ENCODE measurements at regions of chr10 and their contacts with region 1.

Region 1: GRCh38 chr10:13440185-13441061 is 88.4 kb downstream of the BEND7 start:
- DNase-seq: peak; percentile 65
- H3K27ac ChIP-seq: no peak overlapping the region
- CTCF ChIP-seq: peak; percentile 82

Region 2: GRCh38 chr10:13371897-13372470 is 68.4 kb before region 1 on chr10:
- CTCF ChIA-PET with region 1: interaction called, 31 read pairs
- POLR2A ChIA-PET with region 1: no interaction called
- DNase-seq: peak; percentile 91
- H3K27ac ChIP-seq: no peak overlapping the region
- CTCF ChIP-seq: peak; percentile 89

Region 3: DNA sequence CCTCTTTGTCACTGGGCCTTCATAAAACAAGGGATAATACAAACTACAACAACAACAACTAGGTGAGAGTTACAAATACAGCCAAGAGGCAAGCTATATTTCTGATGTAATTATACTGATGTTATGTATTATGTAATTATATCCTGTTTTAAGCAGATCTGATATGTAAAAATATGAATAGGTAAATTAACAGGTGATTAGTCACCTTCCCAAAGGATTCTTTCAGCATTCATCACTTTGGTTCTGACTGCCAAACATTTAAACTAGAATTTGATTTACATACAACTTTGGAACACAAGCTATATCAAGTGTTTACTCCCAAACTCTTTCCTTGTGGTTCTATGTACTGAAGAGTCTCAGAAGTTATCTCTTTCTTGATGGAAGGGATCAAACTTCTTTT is 34.7 kb after region 1 on chr10:
- CTCF ChIA-PET with region 1: no interaction called
- POLR2A ChIA-PET with region 1: no interaction called
- DNase-seq: peak; percentile 60
- H3K27ac ChIP-seq: no peak overlapping the region
- CTCF ChIP-seq: no peak

Region 4: DNA sequence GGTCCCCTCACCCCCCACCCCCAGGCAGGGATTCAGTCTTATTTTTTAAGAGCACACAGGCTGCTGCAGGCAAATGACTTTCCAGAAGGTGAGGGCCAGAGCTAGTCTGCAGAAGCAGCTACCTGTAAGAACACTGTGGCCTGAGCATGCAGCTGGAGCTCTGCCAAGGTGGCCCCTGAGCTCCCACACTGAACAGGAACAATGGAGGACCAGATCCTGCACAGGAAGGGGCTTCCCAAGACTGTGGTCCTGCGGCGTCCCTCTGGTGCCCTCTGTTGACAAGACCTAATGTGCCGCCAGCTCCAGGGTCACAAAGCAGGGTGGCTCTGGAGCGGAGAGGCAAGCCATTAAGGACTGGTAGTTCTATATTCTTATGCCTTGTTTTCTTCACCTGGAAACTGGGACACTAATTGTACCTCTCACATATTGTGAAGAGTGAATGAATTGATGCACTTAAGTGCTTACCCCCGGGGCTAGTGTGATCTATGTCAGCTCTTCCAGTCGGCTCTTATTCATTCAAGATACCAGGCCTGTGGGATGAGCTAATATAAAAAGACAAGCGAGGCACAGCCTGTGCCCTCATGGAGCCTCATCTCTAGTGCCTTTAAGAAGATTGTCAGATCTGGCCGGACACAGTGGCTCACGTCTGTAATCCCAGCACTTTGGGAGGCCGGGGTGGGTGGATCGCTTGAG is 96.4 kb after region 1 on chr10:
- CTCF ChIA-PET with region 1: no interaction called
- POLR2A ChIA-PET with region 1: no interaction called
- DNase-seq: peak; percentile 20
- H3K27ac ChIP-seq: no peak overlapping the region
- CTCF ChIP-seq: peak; percentile 49

Region 5: GRCh38 chr10:13633689-13634088 is 193.3 kb after region 1 on chr10:
- CTCF ChIA-PET with region 1: no interaction called
- POLR2A ChIA-PET with region 1: no interaction called
- DNase-seq: no peak
- H3K27ac ChIP-seq: no peak overlapping the region
- CTCF ChIP-seq: no peak

Measured in RWPE1 (cell line).